ENCODE measurements at regions of chr19 and their contacts with region 1.

Region 1: GRCh38 chr19:51338563-51339312 is 3.2 kb downstream of the VSIG10L start:
- DNase-seq: peak; percentile 68
- ATAC-seq: peak; percentile 74
- H3K4me3 ChIP-seq: peak overlapping the region; percentile 67 to 80 (median 80)
- H3K27ac ChIP-seq: peak overlapping the region; percentile 40
- H3K4me1 ChIP-seq: peaks cover 43% of the 10 kb centered on the region
- H3K27me3 ChIP-seq: no peaks in the 10 kb centered on the region
- CTCF ChIP-seq: peak; percentile 96
- EP300 ChIP-seq: no peak
- POLR2A ChIP-seq: no peak
- RAD21 ChIP-seq: peak; percentile 84

Region 2: DNA sequence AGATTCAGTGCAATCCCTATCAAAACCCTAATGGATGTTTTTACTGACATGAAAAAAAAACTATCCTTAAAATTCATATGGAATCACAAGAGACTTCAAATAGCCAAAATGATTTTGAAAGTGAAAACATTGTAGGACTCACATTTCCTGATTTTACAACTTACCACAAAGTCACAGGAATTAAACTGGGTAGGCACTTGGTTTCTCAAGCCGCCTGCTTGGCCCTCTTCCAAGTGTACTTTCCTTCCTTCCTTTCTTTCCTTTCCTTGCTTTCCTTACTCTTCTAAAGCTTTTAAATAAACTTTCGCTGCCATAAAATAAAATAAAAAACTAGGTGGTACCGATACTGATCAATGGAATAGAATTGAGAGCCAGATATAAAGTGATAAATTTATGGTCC is 134.8 kb before region 1 on chr19:
- CTCF ChIA-PET with region 1: no interaction called
- POLR2A ChIA-PET with region 1: no interaction called
- in situ Hi-C with region 1: no loop called
- intact Hi-C with region 1: no loop called
- DNase-seq: no peak
- ATAC-seq: no peak
- H3K4me3 ChIP-seq: no peak overlapping the region
- H3K27ac ChIP-seq: no peak overlapping the region
- H3K4me1 ChIP-seq: no peaks in the 10 kb centered on the region
- H3K27me3 ChIP-seq: peaks cover 0 to 14% of the 10 kb centered on the region in 2 experiments; a peak in 2 of 5 replicates
- CTCF ChIP-seq: no peak
- EP300 ChIP-seq: no peak
- POLR2A ChIP-seq: no peak
- RAD21 ChIP-seq: no peak

Region 3: GRCh38 chr19:51274037-51274370 is 64.7 kb before region 1 on chr19:
- CTCF ChIA-PET with region 1: no interaction called
- POLR2A ChIA-PET with region 1: no interaction called
- in situ Hi-C with region 1: no loop called
- intact Hi-C with region 1: no loop called
- DNase-seq: no peak
- ATAC-seq: no peak
- H3K4me3 ChIP-seq: no peak overlapping the region
- H3K27ac ChIP-seq: no peak overlapping the region
- H3K4me1 ChIP-seq: peaks cover 8% of the 10 kb centered on the region; the same call in 1 of the 2 replicates
- H3K27me3 ChIP-seq: peaks cover 2 to 16% of the 10 kb centered on the region in 2 experiments; a peak in 4 of 5 replicates
- CTCF ChIP-seq: no peak
- EP300 ChIP-seq: no peak
- POLR2A ChIP-seq: no peak
- RAD21 ChIP-seq: no peak

Region 4: GRCh38 chr19:51354742-51355148 is 16.0 kb after region 1 on chr19:
- CTCF ChIA-PET with region 1: no interaction called
- POLR2A ChIA-PET with region 1: interaction called, 69 read pairs
- in situ Hi-C with region 1: no loop called
- intact Hi-C with region 1: no loop called
- DNase-seq: peak; percentile 99
- ATAC-seq: peak; percentile 76
- H3K4me3 ChIP-seq: peak overlapping the region; percentile 62 to 82 (median 72)
- H3K27ac ChIP-seq: peak overlapping the region; percentile 100
- H3K4me1 ChIP-seq: peaks cover 86% of the 10 kb centered on the region
- H3K27me3 ChIP-seq: no peaks in the 10 kb centered on the region; a peak in 1 of 5 replicates
- CTCF ChIP-seq: no peak
- EP300 ChIP-seq: peak; percentile 42 to 94; a peak in 3 of 4 replicates
- POLR2A ChIP-seq: no peak; a peak in 2 of 4 replicates
- RAD21 ChIP-seq: no peak

Region 5: GRCh38 chr19:51372649-51373504 is 34.1 kb after region 1 on chr19 and contains the start of gene NKG7:
- CTCF ChIA-PET with region 1: no interaction called
- POLR2A ChIA-PET with region 1: interaction called, 91 read pairs
- in situ Hi-C with region 1: no loop called
- intact Hi-C with region 1: no loop called
- DNase-seq: no peak
- ATAC-seq: no peak
- H3K4me3 ChIP-seq: no peak within 1 kb of the TSS
- H3K27ac ChIP-seq: no peak within 1 kb of the TSS
- H3K4me1 ChIP-seq: peaks cover 37% of the 10 kb centered on the region
- H3K27me3 ChIP-seq: peaks cover 0 to 14% of the 10 kb centered on the region in 2 experiments; a peak in 1 of 5 replicates
- CTCF ChIP-seq: no peak
- EP300 ChIP-seq: no peak
- POLR2A ChIP-seq: no peak
- RAD21 ChIP-seq: no peak
- total RNA-seq, gene NKG7: not detected in 2 replicates

Region 6: GRCh38 chr19:51393959-51394836 is 55.5 kb after region 1 on chr19:
- CTCF ChIA-PET with region 1: interaction called, 9 read pairs
- POLR2A ChIA-PET with region 1: interaction called, 9 read pairs
- in situ Hi-C with region 1: loop called (anchors 5 kb)
- intact Hi-C with region 1: no loop called
- DNase-seq: peak; percentile 99
- ATAC-seq: peak; percentile 98
- H3K4me3 ChIP-seq: peak overlapping the region; percentile 60 to 76 (median 66)
- H3K27ac ChIP-seq: peak overlapping the region; percentile 85
- H3K4me1 ChIP-seq: peaks cover 48% of the 10 kb centered on the region
- H3K27me3 ChIP-seq: no peaks in the 10 kb centered on the region
- CTCF ChIP-seq: no peak; the same call in 1 of the 2 replicates
- EP300 ChIP-seq: no peak
- POLR2A ChIP-seq: peak in 1 of 2 experiments; percentile 60; a peak in 2 of 4 replicates
- RAD21 ChIP-seq: no peak

Region 7: GRCh38 chr19:51407511-51408131 is 68.9 kb after region 1 on chr19:
- CTCF ChIA-PET with region 1: interaction called, 38 read pairs
- POLR2A ChIA-PET with region 1: interaction called, 13 read pairs
- in situ Hi-C with region 1: no loop called
- intact Hi-C with region 1: loop called (anchors 1 kb)
- DNase-seq: peak; percentile 74
- ATAC-seq: peak; percentile 92
- H3K4me3 ChIP-seq: no peak overlapping the region
- H3K27ac ChIP-seq: no peak overlapping the region
- H3K4me1 ChIP-seq: peaks cover 19% of the 10 kb centered on the region
- H3K27me3 ChIP-seq: no peaks in the 10 kb centered on the region
- CTCF ChIP-seq: peak; percentile 85
- EP300 ChIP-seq: no peak
- POLR2A ChIP-seq: no peak
- RAD21 ChIP-seq: peak; percentile 80

Region 8: GRCh38 chr19:51439021-51439465 is 100.3 kb after region 1 on chr19:
- CTCF ChIA-PET with region 1: interaction called, 14 read pairs
- POLR2A ChIA-PET with region 1: no interaction called
- in situ Hi-C with region 1: no loop called
- intact Hi-C with region 1: loop called (anchors 1 kb)
- DNase-seq: peak; percentile 14
- ATAC-seq: peak; percentile 49
- H3K4me3 ChIP-seq: no peak overlapping the region
- H3K27ac ChIP-seq: no peak overlapping the region
- H3K4me1 ChIP-seq: no peaks in the 10 kb centered on the region
- H3K27me3 ChIP-seq: peaks cover 1 to 19% of the 10 kb centered on the region in 2 experiments; a peak in 3 of 5 replicates
- CTCF ChIP-seq: peak; percentile 50
- EP300 ChIP-seq: no peak
- POLR2A ChIP-seq: no peak
- RAD21 ChIP-seq: no peak